MCF 10A (cell line): ENCODE measurements at regions of chrX and their contacts with region 1.

Region 1: DNA sequence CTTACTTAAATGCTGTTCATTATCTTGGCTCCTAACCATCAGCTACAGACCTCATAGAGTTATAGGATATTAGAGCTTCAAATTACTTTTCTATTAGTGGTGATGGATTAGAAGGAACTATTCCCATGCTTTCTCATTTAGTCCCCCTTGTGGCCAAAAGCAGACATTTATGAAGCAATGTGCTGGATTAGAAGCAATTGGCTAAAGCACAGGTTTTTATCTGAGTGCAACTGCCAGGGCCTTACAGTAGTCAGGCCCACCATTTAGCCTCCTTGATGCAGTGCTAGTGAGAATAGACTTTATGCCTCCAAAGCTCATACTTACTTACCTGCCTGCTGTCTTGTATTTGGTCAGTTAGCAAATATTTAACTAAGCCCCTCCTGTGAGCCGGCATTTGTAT is 93.0 kb downstream of the TSPAN7 start:
- DNase-seq: peak; percentile 54
- H3K4me3 Mint-ChIP-seq: no peak overlapping the region
- H3K27ac Mint-ChIP-seq: no peak overlapping the region
- H3K4me1 Mint-ChIP-seq: no peaks in the 10 kb centered on the region
- H3K27me3 Mint-ChIP-seq: peaks cover 58% of the 10 kb centered on the region
- CTCF ChIP-seq: peak; percentile 34

Region 2: DNA sequence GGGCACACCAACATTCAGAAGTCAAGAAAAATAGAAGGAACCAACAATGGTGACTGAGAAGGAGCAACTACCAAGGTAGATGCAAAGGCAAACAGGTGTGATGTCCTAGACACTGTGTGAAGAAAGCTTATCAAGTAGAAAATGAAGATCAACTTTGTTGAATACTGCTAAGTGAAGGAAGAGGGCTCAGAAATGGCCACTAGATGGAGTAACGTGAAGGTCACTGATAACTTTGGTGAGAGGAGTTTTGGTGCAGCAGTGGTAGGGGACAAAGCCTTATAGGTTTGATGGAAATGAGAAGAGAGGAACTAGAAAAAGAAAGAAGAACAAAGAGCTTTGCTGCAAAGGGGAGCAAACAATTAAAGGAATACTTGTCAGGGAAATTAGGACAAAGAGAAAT is 278.4 kb before region 1 on chrX:
- CTCF ChIA-PET with region 1: no interaction called
- POLR2A ChIA-PET with region 1: no interaction called
- intact Hi-C with region 1: loop called (anchors 1 kb)
- DNase-seq: peak; percentile 40
- H3K4me3 Mint-ChIP-seq: no peak overlapping the region
- H3K27ac Mint-ChIP-seq: no peak overlapping the region
- H3K4me1 Mint-ChIP-seq: no peaks in the 10 kb centered on the region
- H3K27me3 Mint-ChIP-seq: peaks cover 21% of the 10 kb centered on the region
- CTCF ChIP-seq: peak; percentile 41

Region 3: DNA sequence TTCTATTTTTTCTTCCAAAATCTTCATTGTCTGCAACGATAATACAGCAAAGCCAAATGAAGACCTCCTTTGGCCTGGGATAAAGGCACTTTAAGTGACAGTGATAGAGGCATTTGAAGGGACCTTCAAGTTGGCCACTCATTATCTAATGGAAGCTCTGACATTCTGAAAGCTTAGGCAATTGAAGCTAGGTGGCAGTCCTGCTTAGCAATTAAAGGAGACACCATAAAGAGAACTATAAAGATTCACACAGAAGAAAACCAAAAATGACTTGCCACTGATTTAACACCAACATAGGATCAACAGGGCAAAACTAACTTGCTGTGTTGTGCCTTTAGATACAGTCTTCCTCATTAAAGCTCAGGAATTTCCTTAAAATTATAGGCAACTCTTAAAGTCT is 196.2 kb before region 1 on chrX:
- CTCF ChIA-PET with region 1: interaction called, 28 read pairs
- POLR2A ChIA-PET with region 1: no interaction called
- intact Hi-C with region 1: loop called (anchors 1 kb)
- DNase-seq: peak; percentile 18
- H3K4me3 Mint-ChIP-seq: no peak overlapping the region
- H3K27ac Mint-ChIP-seq: no peak overlapping the region
- H3K4me1 Mint-ChIP-seq: no peaks in the 10 kb centered on the region
- H3K27me3 Mint-ChIP-seq: peaks cover 39% of the 10 kb centered on the region
- CTCF ChIP-seq: no peak